ENCODE measurements at regions of chr12 and their contacts with region 1.

Region 1: DNA sequence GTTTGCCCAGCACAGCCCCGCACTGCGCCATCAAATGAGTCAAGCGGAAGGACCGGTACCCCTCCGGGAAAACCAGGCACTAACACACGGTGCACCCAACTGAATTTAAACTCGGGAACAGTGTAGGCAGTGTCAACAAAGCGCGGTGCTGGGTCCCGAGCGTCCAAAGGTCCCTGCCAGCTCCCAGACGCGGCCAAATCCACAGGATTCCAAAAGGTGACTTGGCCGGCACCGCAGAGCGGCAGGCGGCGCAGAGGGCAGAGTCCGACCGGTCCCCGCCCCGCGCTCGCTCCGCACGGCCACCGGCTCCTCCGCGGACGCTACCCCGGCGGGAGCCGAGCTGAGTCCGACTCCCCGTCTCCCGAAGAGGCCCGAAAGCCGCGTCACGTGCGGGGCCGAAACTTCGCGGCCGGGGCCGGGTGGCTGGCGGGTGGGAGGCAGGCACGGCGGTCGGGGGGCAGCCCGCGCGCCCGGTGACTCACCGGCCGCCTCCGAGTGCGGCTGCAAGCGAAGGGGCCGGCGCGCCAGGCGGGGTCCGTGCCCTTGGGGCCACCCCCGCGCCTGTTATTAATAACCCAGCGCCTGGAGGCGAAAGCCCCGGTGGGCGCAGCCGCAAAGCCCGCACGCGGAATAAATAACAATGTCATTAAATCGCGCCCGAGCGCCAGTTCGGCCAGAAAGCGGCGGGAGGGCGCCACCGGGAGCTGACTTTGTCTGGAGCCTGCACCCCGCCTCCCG is 863 bp downstream of the DENND5B start:
- DNase-seq: peak; percentile 52
- H3K4me3 ChIP-seq: peak overlapping the region; percentile 61 to 90 (median 70)
- H3K27ac ChIP-seq: peak overlapping the region; percentile 47
- H3K4me1 ChIP-seq: peaks cover 12% of the 10 kb centered on the region
- H3K27me3 ChIP-seq: no peaks in the 10 kb centered on the region
- CTCF ChIP-seq: peak in 1 of 2 donors; percentile 19

Region 2: GRCh38 chr12:31471823-31472222 is 118.2 kb before region 1 on chr12:
- CTCF ChIA-PET with region 1: no interaction called
- dilution Hi-C with region 1: no loop called
- in situ Hi-C with region 1: no loop called
- intact Hi-C with region 1: loop called (anchors 5 kb)
- DNase-seq: peak; percentile 81
- H3K4me3 ChIP-seq: no peak overlapping the region
- H3K27ac ChIP-seq: no peak overlapping the region
- H3K4me1 ChIP-seq: no peaks in the 10 kb centered on the region
- H3K27me3 ChIP-seq: no peaks in the 10 kb centered on the region
- CTCF ChIP-seq: no peak

Region 3: GRCh38 chr12:31518680-31519227 is 71.3 kb before region 1 on chr12:
- CTCF ChIA-PET with region 1: no interaction called
- dilution Hi-C with region 1: no loop called
- in situ Hi-C with region 1: no loop called
- intact Hi-C with region 1: loop called (anchors 2 kb)
- DNase-seq: peak; percentile 97
- H3K4me3 ChIP-seq: peak overlapping the region in 1 of 3 experiments; percentile 4
- H3K27ac ChIP-seq: peak overlapping the region; percentile 98
- H3K4me1 ChIP-seq: peaks cover 27% of the 10 kb centered on the region
- H3K27me3 ChIP-seq: no peaks in the 10 kb centered on the region
- CTCF ChIP-seq: no peak